Left ventricle myocardium inferior (tissue), 1 donor: ENCODE measurements at regions of chr15 and their contacts with region 1.

Region 1: GRCh38 chr15:83559310-83559966 is 94.5 kb upstream of the ADAMTSL3 start:
- DNase-seq: no peak
- H3K4me3 ChIP-seq: no peak overlapping the region
- H3K27ac ChIP-seq: no peak overlapping the region
- H3K4me1 ChIP-seq: no peaks in the 10 kb centered on the region
- H3K27me3 ChIP-seq: peaks cover 14% of the 10 kb centered on the region
- CTCF ChIP-seq: peak; percentile 84

Region 2: GRCh38 chr15:83436458-83437158 is 122.8 kb before region 1 on chr15:
- intact Hi-C with region 1: loop called (anchors 5 kb)
- DNase-seq: no peak
- H3K4me3 ChIP-seq: no peak overlapping the region
- H3K27ac ChIP-seq: no peak overlapping the region
- H3K4me1 ChIP-seq: no peaks in the 10 kb centered on the region
- H3K27me3 ChIP-seq: peaks cover 68% of the 10 kb centered on the region
- CTCF ChIP-seq: peak; percentile 56